T-cell (primary cell): ENCODE measurements at regions of chr5 and their contacts with region 1.

Region 1: DNA sequence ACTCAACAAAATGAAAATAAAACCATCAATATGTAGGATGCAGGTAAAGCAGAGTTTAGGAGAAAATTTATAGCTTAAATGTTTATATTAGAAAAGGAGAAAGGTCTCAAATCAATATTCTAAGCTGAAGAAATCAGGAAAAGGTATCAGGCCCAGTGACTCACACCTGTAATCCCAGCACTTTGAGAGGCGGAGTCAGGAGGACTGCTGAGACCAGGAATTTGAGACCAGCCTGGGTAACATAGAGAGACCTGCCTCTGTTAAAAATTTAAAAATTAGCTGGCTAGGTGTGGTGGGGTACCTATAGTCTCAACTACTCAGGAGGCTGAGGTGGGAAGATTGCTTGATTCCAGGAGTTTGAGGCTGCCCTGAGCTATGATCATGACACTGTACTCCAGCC is 32.2 kb downstream of the CCDC69 start:
- DNase-seq: no peak
- ATAC-seq: no peak
- H3K4me3 ChIP-seq: no peak overlapping the region
- H3K4me3 Mint-ChIP-seq: peak overlapping the region in 1 of 3 donors; percentile 52
- H3K27ac ChIP-seq: no peak overlapping the region
- H3K27ac Mint-ChIP-seq: peak overlapping the region; percentile 12 to 70
- H3K4me1 ChIP-seq: peaks cover 3 to 16% of the 10 kb centered on the region in 2 experiments
- H3K4me1 Mint-ChIP-seq: peaks cover 56 to 74% (median 66%) of the 10 kb centered on the region in 3 donors
- H3K27me3 ChIP-seq: no peaks in the 10 kb centered on the region
- H3K27me3 Mint-ChIP-seq: no peaks in the 10 kb centered on the region

Region 2: DNA sequence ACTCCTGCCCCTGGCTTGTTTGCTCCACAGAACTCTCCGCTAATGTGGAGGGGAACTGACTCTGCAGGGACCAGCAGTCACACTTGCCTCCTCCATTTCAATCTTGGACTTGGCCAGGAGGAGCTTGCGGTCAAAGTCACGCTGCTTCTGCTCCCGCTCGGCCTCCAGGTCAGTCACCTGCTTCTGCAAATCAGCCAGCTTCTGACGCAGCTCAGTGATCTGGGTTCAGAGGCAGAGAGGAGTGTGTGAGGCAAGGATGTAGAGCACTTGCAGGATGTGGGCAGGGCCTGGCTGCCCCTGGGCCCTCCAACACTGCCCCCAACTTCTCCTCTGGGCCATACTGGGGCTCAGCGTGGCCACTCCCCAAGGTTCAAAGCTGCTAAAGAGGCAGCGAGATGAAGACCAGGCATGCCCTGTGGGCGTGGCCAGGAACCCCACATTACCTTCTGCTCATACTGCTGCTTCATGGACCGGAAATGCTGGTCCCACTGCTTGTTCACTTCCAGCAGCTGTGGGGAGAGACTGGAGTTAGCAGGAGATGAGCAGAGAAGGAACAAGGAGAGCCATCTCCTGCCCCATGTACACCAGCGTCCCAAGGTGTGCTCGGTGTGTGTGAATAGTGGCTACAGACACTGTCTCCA is 149.1 kb before region 1 on chr5:
- CTCF ChIA-PET with region 1: no interaction called
- POLR2A ChIA-PET with region 1: no interaction called
- DNase-seq: no peak
- ATAC-seq: no peak
- H3K4me3 ChIP-seq: no peak overlapping the region
- H3K4me3 Mint-ChIP-seq: no peak overlapping the region
- H3K27ac ChIP-seq: no peak overlapping the region
- H3K27ac Mint-ChIP-seq: no peak overlapping the region
- H3K4me1 ChIP-seq: no peaks in the 10 kb centered on the region
- H3K4me1 Mint-ChIP-seq: no peaks in the 10 kb centered on the region
- H3K27me3 ChIP-seq: no peaks in the 10 kb centered on the region
- H3K27me3 Mint-ChIP-seq: no peaks in the 10 kb centered on the region

Region 3: DNA sequence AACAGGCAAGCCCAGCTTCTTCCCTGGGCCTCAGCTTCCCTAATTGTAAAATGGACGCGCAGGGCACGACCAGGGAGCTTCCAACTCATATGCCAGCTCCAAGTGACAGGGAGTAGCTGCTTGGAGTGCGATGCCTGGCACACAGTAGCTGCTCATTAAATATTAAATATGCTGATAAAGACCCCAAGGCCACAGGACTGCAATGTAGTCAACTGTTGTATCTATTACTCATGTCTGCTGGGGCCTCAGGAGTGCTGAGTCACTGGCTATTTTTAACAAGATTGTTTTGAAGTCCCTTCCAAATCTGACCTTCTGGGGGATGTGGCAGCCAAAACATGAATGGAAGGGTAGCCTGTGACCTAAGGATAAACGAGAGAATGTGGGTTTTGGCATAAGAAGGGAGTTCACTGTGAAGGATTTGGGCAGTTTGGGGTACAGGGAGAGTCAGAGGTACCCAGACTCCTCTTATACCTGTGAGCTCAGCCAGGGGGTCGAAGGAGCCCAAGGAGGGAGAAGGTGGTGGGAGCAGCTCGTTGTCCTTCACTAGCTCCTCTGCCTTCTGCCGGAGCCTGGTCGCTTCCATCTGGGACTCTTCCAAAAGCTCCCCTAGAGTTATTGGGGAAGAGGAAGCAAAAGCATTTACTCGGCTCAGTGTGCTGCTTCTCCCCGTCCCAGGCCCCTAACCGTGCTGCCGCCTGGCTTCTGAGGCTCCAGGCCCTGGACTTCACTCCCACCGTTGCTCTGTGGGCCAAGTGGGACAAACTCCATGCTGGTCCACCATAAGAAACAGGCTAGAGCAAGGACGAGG is 128.3 kb before region 1 on chr5:
- CTCF ChIA-PET with region 1: no interaction called
- POLR2A ChIA-PET with region 1: interaction called in 1 of 2 experiments, 13 read pairs
- DNase-seq: no peak
- ATAC-seq: no peak
- H3K4me3 ChIP-seq: no peak overlapping the region
- H3K4me3 Mint-ChIP-seq: no peak overlapping the region
- H3K27ac ChIP-seq: no peak overlapping the region
- H3K27ac Mint-ChIP-seq: peak overlapping the region in 1 of 2 donors; percentile 61
- H3K4me1 ChIP-seq: peaks cover 0 to 53% of the 10 kb centered on the region in 2 experiments
- H3K4me1 Mint-ChIP-seq: peaks cover 59 to 68% (median 64%) of the 10 kb centered on the region in 3 donors
- H3K27me3 ChIP-seq: no peaks in the 10 kb centered on the region
- H3K27me3 Mint-ChIP-seq: no peaks in the 10 kb centered on the region

Region 4: DNA sequence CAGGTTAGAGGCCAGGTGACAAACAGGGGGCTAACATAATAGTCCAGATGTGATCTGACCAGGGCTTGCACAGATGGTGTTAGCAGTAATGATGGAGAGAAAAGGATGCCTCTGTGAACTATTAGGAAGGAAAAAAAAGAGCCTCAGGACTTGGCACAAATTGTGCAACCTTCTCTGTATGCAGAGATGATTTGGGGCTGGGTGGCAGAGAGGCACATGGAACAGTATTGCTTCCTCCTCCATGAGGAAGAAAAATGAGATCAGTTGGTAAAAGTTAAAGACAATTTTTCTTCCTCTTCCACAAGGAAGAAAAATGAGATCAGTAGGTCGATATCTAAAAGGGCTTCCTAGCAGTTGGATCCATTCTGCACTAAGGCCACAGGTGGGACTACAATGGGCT is 20.1 kb before region 1 on chr5:
- CTCF ChIA-PET with region 1: no interaction called
- POLR2A ChIA-PET with region 1: no interaction called
- DNase-seq: no peak
- ATAC-seq: no peak
- H3K4me3 ChIP-seq: no peak overlapping the region
- H3K4me3 Mint-ChIP-seq: no peak overlapping the region
- H3K27ac ChIP-seq: no peak overlapping the region
- H3K27ac Mint-ChIP-seq: peak overlapping the region; percentile 61 to 89
- H3K4me1 ChIP-seq: no peaks in the 10 kb centered on the region
- H3K4me1 Mint-ChIP-seq: peaks cover 28 to 33% (median 29%) of the 10 kb centered on the region in 3 donors
- H3K27me3 ChIP-seq: no peaks in the 10 kb centered on the region
- H3K27me3 Mint-ChIP-seq: no peaks in the 10 kb centered on the region

Region 5: DNA sequence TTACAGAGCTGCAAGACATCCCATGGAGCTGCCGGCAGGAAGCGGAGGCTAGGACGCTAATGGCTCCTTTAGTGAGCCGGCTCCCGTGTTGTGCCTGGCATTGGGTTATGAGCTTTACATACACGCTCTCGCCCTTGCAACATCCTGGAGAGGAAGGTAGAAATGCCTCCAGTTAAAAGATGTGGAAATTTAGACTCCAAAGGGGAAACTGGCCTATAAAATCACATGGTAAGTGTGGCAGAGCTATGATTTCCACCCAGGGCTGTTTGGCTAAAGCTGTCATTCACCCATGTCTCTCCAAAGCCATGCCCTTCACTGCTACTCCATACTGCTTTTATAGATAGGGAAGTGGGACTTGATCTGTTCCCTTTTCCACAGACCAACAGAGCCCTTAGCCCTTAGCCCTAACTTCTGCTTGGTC is 66.5 kb after region 1 on chr5:
- CTCF ChIA-PET with region 1: no interaction called
- POLR2A ChIA-PET with region 1: no interaction called
- DNase-seq: no peak
- ATAC-seq: no peak
- H3K4me3 ChIP-seq: no peak overlapping the region
- H3K4me3 Mint-ChIP-seq: no peak overlapping the region
- H3K27ac ChIP-seq: no peak overlapping the region
- H3K27ac Mint-ChIP-seq: no peak overlapping the region
- H3K4me1 ChIP-seq: peaks cover 5 to 10% of the 10 kb centered on the region in 2 experiments
- H3K4me1 Mint-ChIP-seq: peaks cover 18 to 50% (median 38%) of the 10 kb centered on the region in 3 donors
- H3K27me3 ChIP-seq: no peaks in the 10 kb centered on the region
- H3K27me3 Mint-ChIP-seq: no peaks in the 10 kb centered on the region

Region 6: DNA sequence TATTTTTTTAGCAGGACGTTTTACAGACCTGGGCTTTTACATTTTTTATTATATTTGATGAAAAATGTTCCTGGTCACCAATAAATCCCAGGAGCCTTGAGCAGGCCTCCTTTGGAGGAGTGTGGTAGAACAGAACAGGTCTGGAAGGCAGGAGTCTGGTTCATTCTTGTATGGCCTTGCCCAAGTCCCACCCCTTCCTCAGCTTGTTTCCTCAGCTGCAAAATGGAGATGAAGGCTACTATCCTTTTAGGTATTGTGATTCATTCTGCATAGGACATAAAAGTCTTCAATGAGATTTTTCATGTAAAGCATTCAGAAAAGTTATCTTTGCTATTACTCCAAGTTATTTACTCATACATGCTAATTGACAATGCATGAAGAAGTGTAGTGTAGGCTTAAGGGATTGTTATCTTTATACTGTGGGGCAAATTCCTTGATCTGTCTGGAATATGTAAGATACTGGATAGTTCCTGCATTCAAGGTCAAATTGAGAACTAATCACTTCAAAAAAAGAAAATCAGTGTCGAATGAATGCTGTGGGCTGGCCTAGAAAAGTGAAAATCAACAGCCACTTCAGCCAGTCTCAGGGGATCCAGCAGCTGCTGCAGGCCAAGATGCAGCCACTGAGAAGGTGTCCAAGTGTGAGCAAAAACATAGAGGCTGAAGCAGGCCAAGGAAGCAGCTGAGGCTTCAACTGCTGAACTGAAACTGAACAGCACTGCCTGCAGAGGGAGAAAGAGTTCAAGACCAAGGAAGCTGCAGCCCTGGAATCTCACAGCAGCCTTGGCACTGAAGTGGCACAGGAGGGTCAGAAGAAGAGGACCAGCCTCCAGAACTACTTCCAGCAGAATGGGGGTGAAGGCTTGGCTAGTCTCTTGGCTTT is 127.4 kb after region 1 on chr5:
- CTCF ChIA-PET with region 1: no interaction called
- POLR2A ChIA-PET with region 1: interaction called in 1 of 2 experiments, 12 read pairs
- DNase-seq: peak in 1 of 35 experiments; percentile 9
- ATAC-seq: no peak
- H3K4me3 ChIP-seq: no peak overlapping the region
- H3K4me3 Mint-ChIP-seq: no peak overlapping the region
- H3K27ac ChIP-seq: no peak overlapping the region
- H3K27ac Mint-ChIP-seq: no peak overlapping the region
- H3K4me1 ChIP-seq: no peaks in the 10 kb centered on the region
- H3K4me1 Mint-ChIP-seq: peaks cover 0 to 2% (median 0%) of the 10 kb centered on the region in 3 donors
- H3K27me3 ChIP-seq: peaks cover 0 to 13% of the 10 kb centered on the region in 2 experiments
- H3K27me3 Mint-ChIP-seq: peaks cover 2 to 7% of the 10 kb centered on the region in 2 donors